AG04450 (cell line): ENCODE measurements at regions of chr6 and their contacts with region 1.

Region 1: GRCh38 chr6:73631849-73632248 is 21.9 kb downstream of the SLC17A5 start:
- DNase-seq: peak; percentile 63
- H3K4me3 ChIP-seq: no peak overlapping the region
- H3K27ac ChIP-seq: no peak overlapping the region
- H3K27me3 ChIP-seq: no peaks in the 10 kb centered on the region
- CTCF ChIP-seq: no peak

Region 2: DNA sequence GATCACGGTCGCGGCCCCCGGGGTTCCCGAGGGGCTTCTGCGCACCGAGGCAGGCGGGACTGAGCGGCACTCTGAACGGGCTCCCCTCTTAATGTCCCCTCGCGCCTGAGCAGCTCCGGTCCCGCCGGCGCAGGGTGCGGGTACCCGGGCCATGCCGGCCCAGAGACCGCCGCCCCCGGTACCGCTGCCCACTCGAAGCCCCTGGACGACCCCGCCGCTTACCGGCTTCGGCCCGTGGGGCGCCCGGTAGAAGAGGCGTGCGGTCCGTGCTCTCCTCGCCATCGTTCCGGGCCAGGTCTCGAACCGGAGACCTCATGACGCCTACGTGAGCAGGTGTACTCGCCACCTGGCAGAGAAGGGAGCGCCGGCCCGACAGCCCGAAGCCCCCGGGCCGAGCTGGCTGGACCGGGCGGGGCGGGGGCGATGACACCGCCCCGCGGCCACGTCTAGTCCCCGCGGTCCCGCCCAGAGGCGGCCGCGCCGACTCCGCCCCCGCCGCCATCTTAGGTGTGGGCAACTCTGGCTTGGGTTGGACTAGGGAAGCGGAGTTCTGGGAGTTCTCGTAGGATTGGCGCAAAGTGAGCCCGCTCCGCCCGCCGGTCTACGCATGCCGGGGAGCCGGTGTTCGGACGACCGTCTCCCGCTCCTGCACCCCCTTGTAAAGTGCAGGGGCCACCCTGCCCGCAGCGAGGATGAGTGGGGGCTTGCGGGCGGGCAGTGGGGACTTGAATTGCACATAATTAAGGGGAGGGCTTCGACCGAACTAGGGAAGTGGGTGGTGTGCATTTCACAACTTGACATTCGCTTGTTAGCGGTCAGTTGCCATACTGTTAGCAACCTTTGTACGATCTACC is 21.9 kb after region 1 on chr6 and contains the start of gene SLC17A5:
- CTCF ChIA-PET with region 1: interaction called, 9 read pairs
- POLR2A ChIA-PET with region 1: interaction called, 10 read pairs
- DNase-seq: peak; percentile 75
- H3K4me3 ChIP-seq: peak within 1 kb of the TSS; percentile 73
- H3K27ac ChIP-seq: peak within 1 kb of the TSS; percentile 88
- H3K27me3 ChIP-seq: no peaks in the 10 kb centered on the region
- CTCF ChIP-seq: no peak
- polyA plus RNA-seq, gene SLC17A5: 25.9 and 34.0 TPM in 2 replicates